Endothelial cell of umbilical vein (primary cell): ENCODE measurements at regions of chr19 and their contacts with region 1.

Region 1: DNA sequence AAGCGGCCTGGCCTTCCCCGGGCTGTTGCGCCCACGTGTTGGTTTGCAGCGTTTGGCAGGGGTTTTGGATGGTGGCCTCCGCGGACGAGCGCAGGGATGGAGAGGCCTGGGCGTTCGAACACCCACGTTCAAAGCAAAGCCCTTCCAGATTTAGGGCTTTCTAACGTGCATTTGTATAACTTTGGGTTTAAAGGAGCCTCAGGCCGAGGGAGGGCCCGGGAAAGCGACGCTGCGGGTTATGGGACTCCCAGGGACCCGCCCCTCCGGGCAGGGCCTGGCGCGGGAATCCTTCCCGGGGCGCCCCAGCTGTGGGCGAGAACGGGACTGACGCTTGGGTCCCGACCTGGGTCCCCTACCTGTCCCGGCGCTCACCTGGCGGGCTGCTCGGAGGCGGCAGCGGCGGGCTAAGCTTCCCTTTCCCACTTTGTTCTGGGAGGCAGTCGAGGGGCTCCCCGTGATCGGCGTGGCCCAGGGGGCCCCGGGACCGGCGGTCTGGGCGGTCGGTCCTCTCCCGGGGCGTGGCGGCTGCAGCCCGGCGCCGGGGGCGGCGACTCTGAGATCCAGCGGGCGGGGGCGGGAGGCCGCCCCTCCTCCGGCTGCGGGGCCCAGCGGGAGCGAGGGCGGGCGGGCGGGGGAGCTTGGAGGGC is at the start of gene FBXO17:
- DNase-seq: peak; percentile 53
- H3K4me3 ChIP-seq: peak within 1 kb of the TSS; percentile 48 to 65 (median 48)
- H3K27ac ChIP-seq: peak within 1 kb of the TSS; percentile 47
- H3K4me1 ChIP-seq: peaks cover 14% of the 10 kb centered on the region
- H3K27me3 ChIP-seq: no peaks in the 10 kb centered on the region
- CTCF ChIP-seq: no peak
- POLR2A ChIP-seq: peak; percentile 75
- total RNA-seq, gene FBXO17: 23.8 and 24.4 TPM in 2 replicates

Region 2: GRCh38 chr19:38618590-38619360 is 356.6 kb before region 1 on chr19 and contains the start of gene EIF3K:
- CTCF ChIA-PET with region 1: no interaction called
- POLR2A ChIA-PET with region 1: no interaction called
- dilution Hi-C with region 1: no loop called
- intact Hi-C with region 1: loop called (anchors 2 kb)
- DNase-seq: peak; percentile 99
- H3K4me3 ChIP-seq: peak within 1 kb of the TSS; percentile 44 to 99 (median 73)
- H3K27ac ChIP-seq: peak within 1 kb of the TSS; percentile 65
- H3K4me1 ChIP-seq: peaks cover 14% of the 10 kb centered on the region
- H3K27me3 ChIP-seq: no peaks in the 10 kb centered on the region
- CTCF ChIP-seq: no peak
- POLR2A ChIP-seq: peak; percentile 94
- total RNA-seq, gene EIF3K: 267 and 277 TPM in 2 replicates

Region 3: GRCh38 chr19:38989066-38989605 is 13.8 kb after region 1 on chr19:
- CTCF ChIA-PET with region 1: interaction called, 12 read pairs
- POLR2A ChIA-PET with region 1: no interaction called
- dilution Hi-C with region 1: no loop called
- intact Hi-C with region 1: loop called (anchors 1 kb)
- DNase-seq: no peak
- H3K4me3 ChIP-seq: no peak overlapping the region
- H3K27ac ChIP-seq: no peak overlapping the region
- H3K4me1 ChIP-seq: peaks cover 10% of the 10 kb centered on the region
- H3K27me3 ChIP-seq: peaks cover 0 to 2% of the 10 kb centered on the region in 2 experiments
- CTCF ChIP-seq: no peak
- POLR2A ChIP-seq: no peak

Region 4: DNA sequence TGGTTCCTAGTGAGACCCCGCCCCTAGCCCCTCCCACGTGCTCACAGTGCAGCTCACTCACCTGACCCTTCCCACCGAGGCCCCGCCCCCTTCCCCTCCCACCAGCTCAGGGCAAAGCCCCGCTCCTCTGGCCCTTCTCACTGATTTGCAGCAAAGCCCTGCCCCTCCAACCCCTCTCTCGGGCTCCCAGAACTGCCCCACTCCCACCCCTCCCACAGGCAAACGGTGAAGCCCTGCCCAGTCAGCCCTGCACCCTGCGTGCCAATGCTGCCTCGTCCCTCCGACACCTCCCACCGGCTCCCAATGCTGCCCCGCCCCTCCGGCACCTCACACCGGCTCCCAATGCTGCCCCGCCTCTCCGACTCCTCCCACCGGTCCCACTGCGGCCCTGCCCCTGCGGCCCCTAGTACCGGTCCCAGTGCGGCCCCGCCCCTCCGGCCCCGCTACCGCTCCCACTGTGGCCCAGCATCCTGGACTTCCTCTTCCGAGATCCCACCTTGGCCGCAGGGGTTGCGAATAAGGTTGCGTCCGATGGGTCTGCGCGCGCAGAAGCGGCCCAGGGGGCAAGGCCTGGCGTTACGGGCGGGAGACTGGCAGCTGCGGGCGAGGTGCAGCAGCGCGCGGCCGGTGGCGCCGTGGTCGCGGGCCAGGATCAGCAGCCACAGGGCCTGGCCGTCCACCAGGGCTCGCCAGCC is 56.2 kb after region 1 on chr19:
- CTCF ChIA-PET with region 1: interaction called, 6 read pairs
- POLR2A ChIA-PET with region 1: no interaction called
- dilution Hi-C with region 1: no loop called
- intact Hi-C with region 1: loop called (anchors 2 kb)
- DNase-seq: peak; percentile 51
- H3K4me3 ChIP-seq: peak overlapping the region; percentile 28 to 58 (median 53)
- H3K27ac ChIP-seq: no peak overlapping the region
- H3K4me1 ChIP-seq: peaks cover 5% of the 10 kb centered on the region
- H3K27me3 ChIP-seq: no peaks in the 10 kb centered on the region
- CTCF ChIP-seq: no peak
- POLR2A ChIP-seq: no peak

Region 5: DNA sequence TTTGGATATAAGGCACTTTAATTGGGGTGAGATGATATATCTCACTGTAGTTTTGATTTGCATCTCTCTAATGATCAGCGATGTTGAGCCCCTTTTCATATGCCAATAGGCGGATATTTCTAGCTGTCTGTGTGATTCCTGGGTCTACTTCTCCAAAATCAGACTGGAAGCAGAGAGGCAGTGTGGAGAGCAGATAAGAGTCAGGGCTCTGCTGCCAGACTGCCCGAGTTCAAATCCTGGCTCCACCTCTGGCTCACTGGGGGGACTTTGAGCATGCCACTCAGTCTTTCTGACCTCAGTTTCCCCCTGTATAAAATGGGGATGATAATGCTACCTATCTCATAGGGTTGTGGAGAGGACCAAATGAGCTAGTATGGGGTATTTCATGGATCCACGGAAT is 84.8 kb after region 1 on chr19:
- CTCF ChIA-PET with region 1: no interaction called
- POLR2A ChIA-PET with region 1: no interaction called
- dilution Hi-C with region 1: no loop called
- intact Hi-C with region 1: no loop called
- DNase-seq: no peak
- H3K4me3 ChIP-seq: no peak overlapping the region
- H3K27ac ChIP-seq: no peak overlapping the region
- H3K4me1 ChIP-seq: no peaks in the 10 kb centered on the region
- H3K27me3 ChIP-seq: no peaks in the 10 kb centered on the region
- CTCF ChIP-seq: no peak
- POLR2A ChIP-seq: no peak